ENCODE measurements at regions of chr2 and their contacts with region 1.

Region 1: GRCh38 chr2:102082571-102083392 is 59.8 kb upstream of the IL1R1 start:
- DNase-seq: peak; percentile 26
- H3K4me3 Mint-ChIP-seq: peak overlapping the region; percentile 14
- H3K27ac Mint-ChIP-seq: peak overlapping the region; percentile 74
- H3K4me1 Mint-ChIP-seq: peaks cover 28% of the 10 kb centered on the region
- H3K27me3 Mint-ChIP-seq: peaks cover 28% of the 10 kb centered on the region

Region 2: DNA sequence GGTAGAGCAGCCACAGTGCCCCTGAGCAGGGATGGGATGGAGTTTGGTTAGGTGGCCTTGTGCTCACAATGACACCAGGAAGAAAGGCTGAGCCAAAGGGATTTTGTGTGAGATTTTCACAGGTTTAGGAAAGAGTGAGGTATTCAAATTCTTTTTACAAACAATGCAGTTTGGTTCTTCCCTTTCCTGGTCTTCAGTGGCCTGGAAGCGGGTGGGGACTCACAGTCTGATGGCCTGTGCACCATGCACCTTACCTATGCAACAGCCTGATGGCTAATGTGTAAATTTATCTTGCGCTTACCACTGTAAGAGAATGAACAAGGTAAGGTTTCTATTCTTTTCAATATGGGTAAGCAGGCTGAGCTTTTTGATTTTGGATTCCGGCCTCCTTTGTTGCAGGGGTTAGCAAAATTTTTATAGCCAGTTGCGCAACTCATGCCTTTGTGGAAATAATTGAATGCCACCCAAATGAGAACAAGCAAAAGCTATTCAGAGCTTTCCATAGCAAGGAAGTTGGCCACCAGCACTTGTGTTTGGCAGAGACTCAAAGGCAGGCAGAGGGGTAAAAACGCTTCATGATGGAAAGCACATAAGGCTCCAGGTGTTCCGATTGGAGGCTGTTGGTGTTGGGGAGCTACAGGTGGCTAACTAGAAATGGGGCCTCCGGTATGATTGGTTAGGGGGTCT is 114.8 kb before region 1 on chr2:
- intact Hi-C with region 1: no loop called
- DNase-seq: no peak
- H3K4me3 Mint-ChIP-seq: no peak overlapping the region
- H3K27ac Mint-ChIP-seq: no peak overlapping the region
- H3K4me1 Mint-ChIP-seq: peaks cover 5% of the 10 kb centered on the region
- H3K27me3 Mint-ChIP-seq: no peaks in the 10 kb centered on the region

Region 3: DNA sequence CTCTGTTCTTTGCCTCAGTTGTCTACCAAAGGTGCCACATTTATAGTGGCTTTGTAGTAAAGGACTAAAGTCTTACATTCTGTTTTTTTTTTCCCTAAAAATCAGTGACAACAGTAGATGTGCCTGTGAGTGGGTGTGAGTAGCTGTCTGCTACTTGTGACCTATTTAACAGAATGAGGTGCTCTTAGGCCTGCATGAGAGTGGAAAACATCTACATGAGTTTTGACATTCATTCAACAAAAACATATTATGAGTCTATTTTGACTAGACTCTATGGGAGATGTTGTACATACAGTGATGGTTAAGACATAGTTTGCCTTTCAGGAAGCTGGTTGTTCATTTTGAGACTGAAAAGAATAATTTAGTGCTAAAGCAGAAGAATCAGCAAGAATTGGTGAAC is 54.3 kb before region 1 on chr2:
- intact Hi-C with region 1: loop called (anchors 2 kb)
- DNase-seq: no peak
- H3K4me3 Mint-ChIP-seq: no peak overlapping the region
- H3K27ac Mint-ChIP-seq: no peak overlapping the region
- H3K4me1 Mint-ChIP-seq: peaks cover 44% of the 10 kb centered on the region
- H3K27me3 Mint-ChIP-seq: no peaks in the 10 kb centered on the region

Region 4: DNA sequence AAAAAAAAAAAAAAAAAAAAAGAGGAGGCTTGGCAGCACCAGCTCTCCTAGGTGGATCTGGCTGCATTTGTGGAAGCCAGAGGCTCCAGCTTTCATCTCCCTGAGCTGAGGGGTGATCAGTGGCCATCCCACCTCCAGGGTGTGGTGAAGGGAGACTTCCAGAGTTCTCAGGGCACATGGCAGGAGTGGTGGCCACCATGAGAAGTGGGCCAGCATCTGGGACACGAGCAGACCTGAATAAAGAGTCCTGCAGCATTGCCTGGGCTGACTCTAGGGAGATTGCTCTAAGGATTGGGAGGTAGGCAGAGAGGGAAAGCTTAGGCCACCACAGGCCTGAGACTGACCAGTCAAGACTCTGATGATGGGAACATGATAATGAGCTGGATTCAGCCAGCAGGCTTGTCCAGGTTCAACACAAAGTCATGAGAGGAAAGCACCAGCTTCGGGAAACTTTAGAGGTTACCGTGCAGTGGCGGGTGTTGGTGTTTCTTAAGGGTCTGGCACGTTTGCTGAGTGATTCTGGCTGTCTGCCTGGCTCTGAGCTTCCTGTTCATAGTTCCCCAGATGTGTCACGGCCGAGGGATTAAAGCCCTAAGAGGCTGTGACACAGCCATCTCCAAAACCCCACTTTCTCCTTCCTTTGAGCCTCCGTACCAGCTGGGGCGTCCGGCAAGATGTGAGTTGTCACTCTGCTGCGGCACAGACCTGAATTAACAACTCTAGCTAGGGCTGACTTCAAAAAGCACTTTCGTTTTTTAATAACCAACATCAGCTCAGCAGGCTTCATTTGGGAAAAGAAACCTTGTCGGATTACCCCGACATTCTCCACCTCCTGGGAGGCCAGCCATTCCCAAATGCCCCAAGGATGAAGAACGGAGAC is 21.4 kb after region 1 on chr2:
- intact Hi-C with region 1: loop called (anchors 1 kb)
- DNase-seq: no peak
- H3K4me3 Mint-ChIP-seq: peak overlapping the region; percentile 67
- H3K27ac Mint-ChIP-seq: no peak overlapping the region
- H3K4me1 Mint-ChIP-seq: peaks cover 25% of the 10 kb centered on the region
- H3K27me3 Mint-ChIP-seq: peaks cover 50% of the 10 kb centered on the region

Region 5: DNA sequence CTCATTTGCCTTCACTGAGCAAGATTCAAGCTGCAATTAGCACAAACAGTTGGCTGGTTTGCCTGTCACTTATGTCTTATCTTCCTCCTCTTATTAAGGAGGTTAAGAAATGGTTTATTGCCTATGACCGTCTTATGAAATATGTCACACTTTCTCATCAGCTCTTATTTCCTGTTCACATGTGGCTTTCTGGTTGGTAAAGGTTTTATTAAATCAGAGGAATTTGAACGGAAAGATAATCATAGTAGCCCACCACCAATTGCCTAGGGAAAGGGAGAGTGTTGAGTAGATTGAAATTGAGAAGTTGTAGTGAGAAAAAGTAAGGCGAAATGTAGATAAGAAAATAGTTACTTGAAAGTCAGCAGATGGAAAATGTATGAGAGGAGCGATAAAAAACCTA is 55.5 kb after region 1 on chr2:
- intact Hi-C with region 1: loop called (anchors 5 kb)
- DNase-seq: no peak
- H3K4me3 Mint-ChIP-seq: no peak overlapping the region
- H3K27ac Mint-ChIP-seq: peak overlapping the region; percentile 3
- H3K4me1 Mint-ChIP-seq: peaks cover 25% of the 10 kb centered on the region
- H3K27me3 Mint-ChIP-seq: peaks cover 39% of the 10 kb centered on the region

Region 6: DNA sequence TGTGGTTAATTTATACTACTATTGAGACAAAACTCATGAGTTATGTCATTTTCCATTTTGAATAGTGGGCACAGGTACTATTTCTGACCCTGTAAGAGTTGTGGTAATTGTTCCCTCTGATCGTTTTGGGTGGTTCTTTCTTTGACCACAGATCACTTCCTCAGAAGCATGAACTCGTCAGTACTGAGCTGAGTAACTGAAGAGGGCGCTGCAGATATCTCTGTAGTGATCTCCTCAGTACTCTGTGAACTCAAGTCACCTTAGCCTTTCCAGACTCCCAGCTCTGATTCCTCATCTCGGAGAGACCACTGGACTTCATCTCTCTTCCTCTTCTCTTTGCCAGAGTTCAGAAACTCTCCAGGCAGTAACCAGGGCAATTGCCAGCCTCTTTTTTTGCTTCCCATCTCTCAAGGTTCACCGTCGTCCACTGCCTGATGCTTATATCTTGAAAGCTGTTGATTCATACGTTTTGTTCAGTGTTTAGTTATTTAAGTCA is 219.1 kb after region 1 on chr2:
- intact Hi-C with region 1: loop called (anchors 2 kb)
- DNase-seq: peak; percentile 55
- H3K4me3 Mint-ChIP-seq: peak overlapping the region; percentile 59
- H3K27ac Mint-ChIP-seq: peak overlapping the region; percentile 96
- H3K4me1 Mint-ChIP-seq: peaks cover 76% of the 10 kb centered on the region
- H3K27me3 Mint-ChIP-seq: no peaks in the 10 kb centered on the region

Region 7: GRCh38 chr2:102418421-102418961 is 335.7 kb after region 1 on chr2:
- intact Hi-C with region 1: loop called (anchors 1 kb)
- DNase-seq: no peak
- H3K4me3 Mint-ChIP-seq: peak overlapping the region; percentile 73
- H3K27ac Mint-ChIP-seq: peak overlapping the region; percentile 75
- H3K4me1 Mint-ChIP-seq: peaks cover 69% of the 10 kb centered on the region
- H3K27me3 Mint-ChIP-seq: peaks cover 3% of the 10 kb centered on the region